Activated naive CD4-positive, alpha-beta T cell treated with anti-CD3 and anti-CD28 coated beads for 36 hours (primary cell): ENCODE measurements at regions of chr19 and their contacts with region 1.

Region 1: GRCh38 chr19:7098701-7099596 is 29.4 kb downstream of the ZNF557 start:
- DNase-seq: peak; percentile 88
- H3K4me3 Mint-ChIP-seq: peak overlapping the region; percentile 94
- H3K27ac Mint-ChIP-seq: peak overlapping the region; percentile 90
- H3K4me1 Mint-ChIP-seq: peaks cover 16% of the 10 kb centered on the region
- H3K27me3 Mint-ChIP-seq: no peaks in the 10 kb centered on the region

Region 2: GRCh38 chr19:7004313-7004931 is 94.5 kb before region 1 on chr19:
- CTCF ChIA-PET with region 1: no interaction called
- intact Hi-C with region 1: no loop called
- DNase-seq: peak; percentile 31
- H3K4me3 Mint-ChIP-seq: no peak overlapping the region
- H3K27ac Mint-ChIP-seq: no peak overlapping the region
- H3K4me1 Mint-ChIP-seq: peaks cover 36% of the 10 kb centered on the region
- H3K27me3 Mint-ChIP-seq: no peaks in the 10 kb centered on the region

Region 3: DNA sequence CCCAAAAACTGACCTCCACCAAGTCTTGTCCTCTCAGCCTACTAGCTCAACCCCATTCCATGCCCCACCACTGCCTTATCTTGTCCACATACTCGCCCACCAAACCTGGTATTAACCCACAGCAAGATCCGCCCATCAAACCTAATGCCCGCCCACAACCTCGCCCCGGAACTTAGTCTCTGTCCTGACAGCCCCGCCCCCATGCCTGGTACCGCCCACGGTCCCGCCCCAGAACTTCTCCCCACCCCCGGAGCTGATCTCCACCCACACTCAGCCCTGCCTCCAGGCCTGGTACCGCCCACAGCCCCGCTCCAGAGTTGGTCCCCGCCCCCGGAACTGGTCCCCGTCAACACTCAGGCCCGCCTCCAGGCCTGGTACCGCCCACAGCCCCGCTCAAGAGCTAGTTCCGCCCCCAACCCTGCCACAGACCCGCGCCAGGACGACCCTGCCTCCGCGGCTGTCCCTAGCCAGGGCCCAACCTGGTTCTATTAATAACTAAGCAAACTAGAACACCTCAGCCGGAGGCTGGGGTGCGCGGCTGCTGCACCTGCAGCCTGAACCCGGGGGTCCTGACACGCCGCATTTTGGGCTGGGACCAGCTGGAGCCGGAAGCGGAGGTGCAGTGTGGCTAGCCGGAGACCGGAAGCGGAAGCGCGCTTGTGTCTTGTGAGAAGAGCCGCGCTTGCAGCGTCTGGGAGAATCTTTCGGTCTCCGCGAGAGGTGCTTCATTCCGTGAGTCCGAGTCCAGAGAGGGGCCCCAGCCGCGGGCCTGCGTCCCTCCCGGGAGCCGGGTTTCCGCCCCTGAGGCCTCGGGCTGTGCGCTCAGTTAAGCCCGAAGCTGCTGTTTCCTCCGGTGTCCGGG is 29.7 kb before region 1 on chr19 and contains the start of gene ZNF557:
- CTCF ChIA-PET with region 1: interaction called, 4 read pairs
- intact Hi-C with region 1: loop called (anchors 1 kb)
- DNase-seq: peak; percentile 100
- H3K4me3 Mint-ChIP-seq: peak within 1 kb of the TSS; percentile 91
- H3K27ac Mint-ChIP-seq: peak within 1 kb of the TSS; percentile 91
- H3K4me1 Mint-ChIP-seq: peaks cover 18% of the 10 kb centered on the region
- H3K27me3 Mint-ChIP-seq: no peaks in the 10 kb centered on the region
- total RNA-seq, gene ZNF557: 4.7 to 5.6 TPM

Region 4: DNA sequence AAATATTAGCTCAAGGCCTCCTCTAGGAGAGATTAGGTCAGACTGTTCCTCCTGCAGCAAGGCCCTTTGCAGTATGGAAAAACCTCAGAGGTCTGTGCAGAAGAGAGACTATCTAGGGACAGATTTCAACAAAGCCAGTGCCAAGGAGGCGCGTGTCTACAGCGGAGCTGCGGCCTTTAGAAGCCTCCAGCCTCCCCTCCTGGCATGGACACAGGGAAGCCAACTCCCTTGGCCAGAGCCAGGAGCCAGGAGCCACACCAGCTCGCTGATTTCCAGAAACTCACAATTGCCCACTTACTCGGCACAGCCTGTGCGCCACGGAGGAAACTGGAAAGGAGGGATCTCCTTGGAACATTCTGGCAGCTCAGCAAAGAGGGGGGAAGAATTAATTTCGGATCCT is 131.9 kb after region 1 on chr19:
- CTCF ChIA-PET with region 1: no interaction called
- intact Hi-C with region 1: no loop called
- DNase-seq: no peak
- H3K4me3 Mint-ChIP-seq: no peak overlapping the region
- H3K27ac Mint-ChIP-seq: no peak overlapping the region
- H3K4me1 Mint-ChIP-seq: peaks cover 2% of the 10 kb centered on the region
- H3K27me3 Mint-ChIP-seq: no peaks in the 10 kb centered on the region

Region 5: DNA sequence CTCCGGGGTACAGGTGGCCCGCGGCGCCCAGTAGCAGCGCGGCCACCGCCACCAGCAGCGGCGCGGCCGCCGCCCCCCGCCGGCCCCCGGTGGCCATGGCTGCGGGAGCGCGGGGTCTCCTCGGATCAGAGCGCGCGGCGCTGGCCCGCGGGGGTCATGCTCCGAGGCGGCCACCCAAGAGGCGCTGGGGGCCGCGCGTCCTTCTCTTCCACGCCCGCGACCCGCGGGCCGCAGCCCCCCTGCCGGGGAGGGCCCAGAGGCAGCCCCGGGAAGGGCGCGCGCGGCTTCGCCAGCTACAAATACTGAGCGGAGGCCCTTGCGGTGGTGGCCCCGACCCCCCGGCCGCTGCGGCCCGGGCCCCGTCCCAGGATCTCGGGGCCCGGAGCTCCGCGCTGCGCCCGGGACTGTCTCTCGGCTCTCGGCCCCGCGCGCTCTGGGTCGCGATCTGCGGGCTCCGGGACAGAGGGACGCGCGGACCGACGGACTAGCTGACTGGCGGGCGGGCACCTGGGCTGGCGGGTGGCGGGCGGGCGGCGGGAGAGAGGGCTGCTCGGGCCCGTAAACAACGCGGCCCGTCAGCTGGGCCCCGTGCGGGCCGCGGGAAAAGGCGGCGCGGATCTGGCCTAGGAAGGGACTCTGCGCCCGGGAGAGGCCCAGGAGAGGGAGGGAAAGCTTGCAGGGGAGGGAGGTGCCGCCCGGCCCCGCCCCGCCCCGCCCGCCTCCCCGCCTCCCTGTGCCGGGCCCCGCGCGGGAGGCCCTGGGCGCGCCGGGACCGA is 195.0 kb after region 1 on chr19 and contains the start of gene INSR:
- CTCF ChIA-PET with region 1: no interaction called
- intact Hi-C with region 1: no loop called
- DNase-seq: peak; percentile 75
- H3K4me3 Mint-ChIP-seq: peak within 1 kb of the TSS; percentile 73
- H3K27ac Mint-ChIP-seq: no peak within 1 kb of the TSS
- H3K4me1 Mint-ChIP-seq: peaks cover 9% of the 10 kb centered on the region
- H3K27me3 Mint-ChIP-seq: peaks cover 36% of the 10 kb centered on the region
- total RNA-seq, gene INSR: 3.7 to 3.9 TPM

Region 6: GRCh38 chr19:7382694-7383093 is 283.7 kb after region 1 on chr19:
- CTCF ChIA-PET with region 1: interaction called, 6 read pairs
- intact Hi-C with region 1: loop called (anchors 2 kb)
- DNase-seq: no peak
- H3K4me3 Mint-ChIP-seq: no peak overlapping the region
- H3K27ac Mint-ChIP-seq: no peak overlapping the region
- H3K4me1 Mint-ChIP-seq: peaks cover 9% of the 10 kb centered on the region
- H3K27me3 Mint-ChIP-seq: no peaks in the 10 kb centered on the region